Common myeloid progenitor, CD34-positive (primary cell): ENCODE measurements at regions of chr3 and their contacts with region 1.

Region 1: GRCh38 chr3:32733631-32734229 is 48.7 kb downstream of the CNOT10 start:
- DNase-seq: peak; percentile 55 to 72 (median 69)
- H3K4me3 ChIP-seq: no peak overlapping the region
- H3K27ac ChIP-seq: no peak overlapping the region
- H3K4me1 ChIP-seq: no peaks in the 10 kb centered on the region
- H3K27me3 ChIP-seq: no peaks in the 10 kb centered on the region

Region 2: DNA sequence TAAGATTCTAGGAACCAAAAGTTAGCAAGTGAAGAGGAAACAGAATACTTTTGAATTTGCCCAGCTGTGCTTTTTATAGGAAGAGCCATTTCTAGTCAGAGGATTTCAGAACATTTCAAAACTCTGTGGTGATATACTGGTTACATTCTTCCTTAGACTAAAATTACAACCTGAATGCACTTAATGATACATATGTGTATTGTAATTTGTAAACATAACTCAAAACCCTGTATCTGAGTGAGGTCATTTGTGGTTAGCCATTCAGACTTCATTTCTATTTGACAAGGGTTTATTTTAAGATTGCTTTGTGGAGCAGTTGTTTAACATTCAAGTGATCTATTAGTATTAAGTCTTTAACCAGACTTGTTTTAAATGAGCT is 24.6 kb after region 1 on chr3:
- CTCF ChIA-PET with region 1: no interaction called
- POLR2A ChIA-PET with region 1: no interaction called
- DNase-seq: no peak
- H3K4me3 ChIP-seq: no peak overlapping the region
- H3K27ac ChIP-seq: peak overlapping the region in 1 of 2 experiments; percentile 16
- H3K4me1 ChIP-seq: peaks cover 0 to 41% (median 4%) of the 10 kb centered on the region in 4 experiments
- H3K27me3 ChIP-seq: no peaks in the 10 kb centered on the region

Region 3: GRCh38 chr3:32934150-32934742 is 200.5 kb after region 1 on chr3:
- CTCF ChIA-PET with region 1: interaction called, 51 read pairs
- POLR2A ChIA-PET with region 1: no interaction called
- DNase-seq: peak in 2 of 3 donors; percentile 38 to 50
- H3K4me3 ChIP-seq: no peak overlapping the region
- H3K27ac ChIP-seq: no peak overlapping the region
- H3K4me1 ChIP-seq: no peaks in the 10 kb centered on the region
- H3K27me3 ChIP-seq: no peaks in the 10 kb centered on the region

Region 4: DNA sequence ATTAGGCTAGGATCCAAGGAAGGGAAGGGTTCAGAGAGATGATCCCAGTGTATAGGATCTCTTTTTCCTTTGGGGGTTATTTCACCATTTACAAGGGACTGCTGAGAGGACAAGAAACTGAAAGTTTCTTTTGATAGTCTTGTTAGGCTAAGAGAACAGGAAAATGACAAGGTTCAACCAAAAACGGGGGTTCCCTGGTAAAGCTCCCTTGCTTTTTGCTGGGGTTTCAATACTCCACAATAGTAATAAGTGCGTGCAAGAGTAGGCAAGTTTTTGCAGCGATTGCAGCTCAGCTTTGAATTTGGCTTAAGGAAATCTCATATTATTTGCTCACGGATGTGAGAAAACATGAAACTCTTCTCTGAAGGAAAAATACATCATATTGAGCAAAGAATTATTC is 503.7 kb after region 1 on chr3:
- CTCF ChIA-PET with region 1: no interaction called
- POLR2A ChIA-PET with region 1: no interaction called
- DNase-seq: no peak
- H3K4me3 ChIP-seq: no peak overlapping the region
- H3K27ac ChIP-seq: no peak overlapping the region
- H3K4me1 ChIP-seq: no peaks in the 10 kb centered on the region
- H3K27me3 ChIP-seq: no peaks in the 10 kb centered on the region